Activated CD4-positive, alpha-beta memory T cell treated with anti-CD3 and anti-CD28 coated beads for 36 hours (primary cell): ENCODE measurements at regions of chr14 and their contacts with region 1.

Region 1: GRCh38 chr14:70887207-70887681 is 20.0 kb upstream of the PCNX1 start:
- DNase-seq: peak; percentile 25
- H3K4me3 Mint-ChIP-seq: peak overlapping the region; percentile 49
- H3K27ac Mint-ChIP-seq: peak overlapping the region; percentile 85
- H3K4me1 Mint-ChIP-seq: peaks cover 82% of the 10 kb centered on the region
- H3K27me3 Mint-ChIP-seq: no peaks in the 10 kb centered on the region

Region 2: GRCh38 chr14:70203686-70204085 is 683.6 kb before region 1 on chr14:
- CTCF ChIA-PET with region 1: no interaction called
- POLR2A ChIA-PET with region 1: no interaction called
- intact Hi-C with region 1: no loop called
- DNase-seq: no peak
- H3K4me3 Mint-ChIP-seq: no peak overlapping the region
- H3K27ac Mint-ChIP-seq: no peak overlapping the region
- H3K4me1 Mint-ChIP-seq: no peaks in the 10 kb centered on the region
- H3K27me3 Mint-ChIP-seq: peaks cover 33% of the 10 kb centered on the region

Region 3: DNA sequence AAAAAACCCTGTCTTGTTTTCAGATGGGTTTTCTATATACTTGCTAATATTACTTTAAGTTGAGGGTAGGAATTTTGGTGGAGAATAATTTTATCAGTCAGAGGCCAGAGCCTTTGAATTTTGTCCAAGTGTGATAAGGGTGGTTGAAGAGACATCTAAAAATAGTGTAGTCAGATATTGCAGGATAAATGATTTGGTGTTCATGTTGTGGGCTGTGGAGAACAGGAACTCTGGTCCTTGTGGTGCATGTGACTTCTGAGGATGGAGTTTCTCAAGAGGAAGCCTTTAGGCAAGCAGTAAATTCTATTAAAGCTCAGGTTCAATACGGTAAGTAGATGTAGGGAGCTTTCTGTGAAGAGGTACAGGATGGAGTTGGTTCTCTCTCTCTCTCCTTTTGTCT is 432.5 kb before region 1 on chr14:
- CTCF ChIA-PET with region 1: no interaction called
- POLR2A ChIA-PET with region 1: no interaction called
- intact Hi-C with region 1: no loop called
- DNase-seq: no peak
- H3K4me3 Mint-ChIP-seq: no peak overlapping the region
- H3K27ac Mint-ChIP-seq: no peak overlapping the region
- H3K4me1 Mint-ChIP-seq: no peaks in the 10 kb centered on the region
- H3K27me3 Mint-ChIP-seq: no peaks in the 10 kb centered on the region

Region 4: GRCh38 chr14:70655110-70655826 is 232.0 kb before region 1 on chr14:
- CTCF ChIA-PET with region 1: no interaction called
- POLR2A ChIA-PET with region 1: no interaction called
- intact Hi-C with region 1: loop called (anchors 10 kb)
- DNase-seq: peak; percentile 87
- H3K4me3 Mint-ChIP-seq: peak overlapping the region; percentile 84
- H3K27ac Mint-ChIP-seq: peak overlapping the region; percentile 99
- H3K4me1 Mint-ChIP-seq: peaks cover 86% of the 10 kb centered on the region
- H3K27me3 Mint-ChIP-seq: no peaks in the 10 kb centered on the region

Region 5: GRCh38 chr14:70821584-70822529 is 65.4 kb before region 1 on chr14:
- CTCF ChIA-PET with region 1: interaction called, 31 read pairs
- POLR2A ChIA-PET with region 1: no interaction called
- intact Hi-C with region 1: loop called (anchors 2 kb)
- DNase-seq: peak; percentile 80
- H3K4me3 Mint-ChIP-seq: peak overlapping the region; percentile 76
- H3K27ac Mint-ChIP-seq: no peak overlapping the region
- H3K4me1 Mint-ChIP-seq: peaks cover 12% of the 10 kb centered on the region
- H3K27me3 Mint-ChIP-seq: peaks cover 9% of the 10 kb centered on the region

Region 6: DNA sequence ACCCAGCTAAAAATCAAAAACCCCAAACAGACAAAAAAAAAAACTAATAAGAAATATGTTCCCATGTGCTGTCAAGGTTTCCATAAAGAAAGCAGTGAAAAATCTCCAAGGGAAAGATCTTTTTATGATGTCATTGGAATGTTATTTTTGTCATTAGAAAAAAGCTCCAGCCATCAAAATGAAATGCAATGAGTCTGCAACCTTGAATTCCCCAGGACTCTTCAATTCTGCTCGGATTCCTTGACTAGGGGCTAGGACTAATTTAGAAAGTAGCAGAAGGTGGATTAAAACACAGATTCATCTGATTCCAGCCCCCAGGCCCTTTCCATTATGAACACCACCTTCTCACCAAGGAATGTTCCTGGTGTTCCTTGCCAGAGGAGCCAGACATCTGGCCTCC is 14.0 kb after region 1 on chr14:
- CTCF ChIA-PET with region 1: interaction called, 199 read pairs
- POLR2A ChIA-PET with region 1: interaction called, 35 read pairs
- intact Hi-C with region 1: loop called (anchors 1 kb)
- DNase-seq: no peak
- H3K4me3 Mint-ChIP-seq: no peak overlapping the region
- H3K27ac Mint-ChIP-seq: peak overlapping the region; percentile 48
- H3K4me1 Mint-ChIP-seq: peaks cover 53% of the 10 kb centered on the region
- H3K27me3 Mint-ChIP-seq: peaks cover 2% of the 10 kb centered on the region

Region 7: DNA sequence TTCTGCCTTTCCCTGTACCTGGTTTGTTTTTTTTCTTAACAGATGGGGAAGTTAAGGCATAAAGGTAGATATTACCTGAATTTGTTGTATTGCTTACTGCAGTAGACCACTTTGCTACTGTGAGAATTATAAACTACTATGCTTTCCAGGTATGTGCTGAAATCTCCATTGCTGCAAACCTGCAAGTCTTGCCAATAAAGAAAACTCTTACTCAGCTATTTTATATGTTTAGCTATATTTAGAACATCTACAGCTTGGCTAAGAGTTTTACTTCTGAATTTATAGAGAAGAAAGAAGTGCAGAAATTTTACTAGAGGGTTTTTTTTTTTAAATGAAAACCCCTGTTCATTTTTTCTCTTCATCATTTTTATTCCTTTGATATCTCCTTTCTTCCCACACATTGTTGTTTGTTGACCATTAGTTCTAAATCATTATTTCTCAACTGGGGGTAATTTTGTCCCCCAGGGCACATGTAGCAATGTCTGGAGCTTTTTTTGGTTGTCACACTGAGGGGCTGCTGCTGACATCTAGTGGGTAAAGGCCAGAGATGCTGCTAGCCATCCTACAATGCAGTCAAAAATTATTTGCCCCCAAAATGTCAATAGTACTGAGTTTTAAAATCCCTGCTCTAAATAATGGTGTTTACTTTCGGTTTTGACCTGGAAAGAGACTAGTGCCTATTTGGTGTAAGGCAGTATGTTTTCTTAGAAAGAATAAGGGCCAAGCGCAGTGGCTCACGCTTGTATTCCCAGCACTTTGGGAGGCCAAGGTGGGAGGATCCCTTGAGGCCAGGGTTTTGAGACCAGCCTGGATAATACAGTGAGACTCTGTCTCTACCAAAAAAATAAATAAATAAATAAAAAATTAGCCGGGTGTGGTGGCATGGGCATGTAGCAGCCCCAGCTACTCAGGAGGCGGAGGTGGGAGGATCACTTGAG is 68.6 kb after region 1 on chr14:
- CTCF ChIA-PET with region 1: interaction called, 11 read pairs
- POLR2A ChIA-PET with region 1: interaction called, 3 read pairs
- intact Hi-C with region 1: loop called (anchors 1 kb)
- DNase-seq: peak; percentile 57
- H3K4me3 Mint-ChIP-seq: no peak overlapping the region
- H3K27ac Mint-ChIP-seq: no peak overlapping the region
- H3K4me1 Mint-ChIP-seq: peaks cover 45% of the 10 kb centered on the region
- H3K27me3 Mint-ChIP-seq: no peaks in the 10 kb centered on the region

Region 8: GRCh38 chr14:72303930-72304329 is 1416.7 kb after region 1 on chr14:
- CTCF ChIA-PET with region 1: no interaction called
- POLR2A ChIA-PET with region 1: no interaction called
- intact Hi-C with region 1: no loop called
- DNase-seq: no peak
- H3K4me3 Mint-ChIP-seq: no peak overlapping the region
- H3K27ac Mint-ChIP-seq: no peak overlapping the region
- H3K4me1 Mint-ChIP-seq: no peaks in the 10 kb centered on the region
- H3K27me3 Mint-ChIP-seq: peaks cover 42% of the 10 kb centered on the region

Region 9: DNA sequence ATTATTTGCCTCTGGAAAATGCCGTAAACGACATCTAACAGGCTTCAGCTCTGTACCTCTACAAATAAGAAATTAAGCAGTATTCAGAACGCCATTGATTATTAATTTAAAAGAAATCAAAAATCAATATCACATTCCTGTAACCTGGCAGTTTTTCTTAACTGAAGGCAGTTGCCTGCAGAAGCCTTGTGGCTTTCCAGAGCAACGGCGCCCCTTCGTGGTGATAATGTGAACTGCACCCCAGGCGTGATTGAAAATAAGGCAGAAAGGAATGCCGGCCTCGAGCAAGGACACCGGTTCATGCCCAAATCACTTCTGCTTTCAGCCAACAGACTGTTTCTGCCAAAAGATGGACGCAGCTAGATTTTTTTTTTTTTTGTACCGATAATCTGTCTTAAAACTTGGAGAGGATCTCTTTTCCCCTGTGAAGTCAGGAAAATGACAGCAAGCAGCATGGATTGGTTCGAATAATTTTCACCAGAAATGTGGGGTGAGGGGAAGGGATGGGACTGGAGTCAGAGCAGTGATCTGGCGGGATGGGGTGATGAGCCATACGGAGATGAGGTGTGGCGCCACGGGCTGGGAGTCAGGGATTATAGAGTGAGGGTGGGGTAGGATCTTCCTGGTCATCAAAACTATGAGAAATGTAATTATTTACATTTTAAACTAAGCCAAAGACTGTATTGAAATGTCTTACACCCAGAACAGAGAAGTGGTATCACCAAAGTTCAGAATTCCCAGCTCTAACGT is 1533.7 kb after region 1 on chr14:
- CTCF ChIA-PET with region 1: no interaction called
- POLR2A ChIA-PET with region 1: no interaction called
- intact Hi-C with region 1: no loop called
- DNase-seq: peak; percentile 86
- H3K4me3 Mint-ChIP-seq: no peak overlapping the region
- H3K27ac Mint-ChIP-seq: no peak overlapping the region
- H3K4me1 Mint-ChIP-seq: peaks cover 4% of the 10 kb centered on the region
- H3K27me3 Mint-ChIP-seq: peaks cover 9% of the 10 kb centered on the region